Activated CD4-positive, alpha-beta memory T cell treated with anti-CD3 and anti-CD28 coated beads for 36 hours (primary cell): ENCODE measurements at regions of chr5 and their contacts with region 1.

Region 1: DNA sequence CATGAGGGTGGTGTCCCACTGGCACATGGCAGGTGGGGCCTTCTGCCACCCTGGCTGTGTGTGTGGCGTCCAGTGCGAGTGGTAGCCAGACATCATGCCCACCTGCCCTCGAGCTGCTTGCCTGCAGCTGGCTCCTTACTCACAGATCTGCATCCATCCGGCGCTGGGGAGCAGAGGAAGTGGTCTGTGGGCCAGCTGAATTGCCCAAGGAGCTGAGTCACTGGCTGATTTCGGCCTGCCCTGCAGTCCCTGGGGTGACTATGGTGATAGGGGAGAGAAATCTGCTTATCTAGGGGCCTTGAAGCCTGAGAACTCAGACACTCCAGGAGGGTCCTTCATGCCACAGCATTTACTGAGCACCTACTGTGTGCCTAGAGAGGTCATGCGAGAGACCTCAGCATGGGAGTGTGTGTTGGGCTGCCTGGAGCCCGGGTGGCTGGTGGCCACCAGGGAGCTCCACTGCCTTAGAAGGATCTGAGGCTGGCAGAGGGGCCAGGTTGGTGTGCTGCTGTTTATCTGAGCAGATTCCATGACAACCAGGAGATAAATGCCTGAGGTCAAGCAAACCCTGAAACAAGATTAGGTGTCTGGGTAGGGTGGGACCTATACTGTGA is 57.1 kb downstream of the SLC22A5 start:
- DNase-seq: peak; percentile 91
- H3K4me3 Mint-ChIP-seq: peak overlapping the region; percentile 65
- H3K27ac Mint-ChIP-seq: peak overlapping the region; percentile 98
- H3K4me1 Mint-ChIP-seq: peaks cover 96% of the 10 kb centered on the region
- H3K27me3 Mint-ChIP-seq: no peaks in the 10 kb centered on the region

Region 2: GRCh38 chr5:132103332-132103951 is 323.2 kb before region 1 on chr5:
- CTCF ChIA-PET with region 1: no interaction called
- POLR2A ChIA-PET with region 1: no interaction called
- intact Hi-C with region 1: loop called (anchors 2 kb)
- DNase-seq: peak; percentile 84
- H3K4me3 Mint-ChIP-seq: peak overlapping the region; percentile 38
- H3K27ac Mint-ChIP-seq: peak overlapping the region; percentile 86
- H3K4me1 Mint-ChIP-seq: peaks cover 74% of the 10 kb centered on the region
- H3K27me3 Mint-ChIP-seq: no peaks in the 10 kb centered on the region

Region 3: GRCh38 chr5:132410451-132411381 is 15.9 kb before region 1 on chr5:
- CTCF ChIA-PET with region 1: interaction called, 33 read pairs
- POLR2A ChIA-PET with region 1: interaction called, 51 read pairs
- intact Hi-C with region 1: loop called (anchors 1 kb)
- DNase-seq: peak; percentile 90
- H3K4me3 Mint-ChIP-seq: peak overlapping the region; percentile 93
- H3K27ac Mint-ChIP-seq: peak overlapping the region; percentile 96
- H3K4me1 Mint-ChIP-seq: peaks cover 65% of the 10 kb centered on the region
- H3K27me3 Mint-ChIP-seq: no peaks in the 10 kb centered on the region

Region 4: GRCh38 chr5:132456296-132457001 is 29.8 kb after region 1 on chr5:
- CTCF ChIA-PET with region 1: interaction called, 32 read pairs
- POLR2A ChIA-PET with region 1: interaction called, 102 read pairs
- intact Hi-C with region 1: loop called (anchors 1 kb)
- DNase-seq: peak; percentile 76
- H3K4me3 Mint-ChIP-seq: peak overlapping the region; percentile 53
- H3K27ac Mint-ChIP-seq: peak overlapping the region; percentile 92
- H3K4me1 Mint-ChIP-seq: peaks cover 90% of the 10 kb centered on the region
- H3K27me3 Mint-ChIP-seq: no peaks in the 10 kb centered on the region

Region 5: GRCh38 chr5:132473019-132473531 is 46.4 kb after region 1 on chr5:
- CTCF ChIA-PET with region 1: interaction called, 21 read pairs
- POLR2A ChIA-PET with region 1: interaction called, 361 read pairs
- intact Hi-C with region 1: no loop called
- DNase-seq: peak; percentile 90
- H3K4me3 Mint-ChIP-seq: peak overlapping the region; percentile 7
- H3K27ac Mint-ChIP-seq: peak overlapping the region; percentile 91
- H3K4me1 Mint-ChIP-seq: peaks cover 75% of the 10 kb centered on the region
- H3K27me3 Mint-ChIP-seq: no peaks in the 10 kb centered on the region

Region 6: DNA sequence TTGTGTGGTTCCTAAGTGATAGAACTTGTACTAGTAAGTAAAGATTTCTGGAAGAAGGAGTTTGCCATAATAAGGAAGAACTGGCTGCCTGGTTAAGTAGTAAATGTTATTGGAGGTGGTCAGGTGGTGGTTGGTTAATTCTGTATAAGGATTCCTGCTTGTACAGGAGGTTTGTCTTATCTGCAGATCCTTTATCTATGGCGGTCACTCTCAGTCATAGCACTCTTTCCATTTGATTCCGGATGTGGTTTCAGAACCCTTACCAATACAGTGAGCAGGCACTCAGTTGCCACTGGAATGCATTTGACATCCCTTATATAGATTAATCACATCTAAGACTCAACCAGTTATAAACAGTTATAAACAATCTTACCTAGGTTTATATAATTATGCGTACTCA is 180.5 kb after region 1 on chr5:
- CTCF ChIA-PET with region 1: no interaction called
- POLR2A ChIA-PET with region 1: no interaction called
- intact Hi-C with region 1: no loop called
- DNase-seq: no peak
- H3K4me3 Mint-ChIP-seq: no peak overlapping the region
- H3K27ac Mint-ChIP-seq: no peak overlapping the region
- H3K4me1 Mint-ChIP-seq: no peaks in the 10 kb centered on the region
- H3K27me3 Mint-ChIP-seq: no peaks in the 10 kb centered on the region